AG04450 (cell line): ENCODE measurements at regions of chr15 and their contacts with region 1.

Region 1: DNA sequence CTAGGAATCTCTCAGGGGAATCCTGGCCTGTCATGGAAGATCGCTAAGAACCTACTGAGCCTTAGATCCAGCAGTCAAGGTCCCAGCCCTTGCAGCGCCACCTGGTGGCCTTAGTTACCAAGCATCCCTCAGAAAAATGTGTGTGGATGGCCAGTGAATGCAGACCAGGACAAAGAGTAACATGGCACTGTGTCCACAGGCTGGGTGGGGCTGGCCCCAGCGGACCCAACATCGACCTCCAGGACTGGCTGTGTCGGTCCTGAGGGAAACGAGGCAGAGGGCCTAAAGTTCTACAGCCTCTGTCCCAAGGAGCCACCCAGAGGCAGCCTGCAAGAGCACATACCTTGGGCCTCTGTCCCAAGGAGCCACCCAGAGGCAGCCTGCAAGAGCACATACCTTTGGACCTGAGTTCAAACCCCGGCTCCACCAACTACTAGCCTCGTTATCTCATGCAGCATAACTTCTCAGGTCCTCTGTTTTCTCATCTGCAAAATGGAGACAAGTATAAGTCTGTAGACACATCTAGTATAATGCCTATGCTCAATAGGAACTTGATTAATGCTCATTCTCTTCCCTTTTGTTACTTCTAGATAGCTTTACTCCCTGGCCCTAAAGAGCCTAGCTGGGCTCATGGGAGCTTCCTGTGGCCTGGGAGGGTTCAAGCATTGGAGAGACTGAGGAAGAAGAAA is 57.5 kb upstream of the HERC1 start:
- DNase-seq: peak; percentile 36
- H3K4me3 ChIP-seq: no peak overlapping the region
- H3K27ac ChIP-seq: no peak overlapping the region
- H3K27me3 ChIP-seq: peaks cover 7% of the 10 kb centered on the region
- CTCF ChIP-seq: peak; percentile 89

Region 2: DNA sequence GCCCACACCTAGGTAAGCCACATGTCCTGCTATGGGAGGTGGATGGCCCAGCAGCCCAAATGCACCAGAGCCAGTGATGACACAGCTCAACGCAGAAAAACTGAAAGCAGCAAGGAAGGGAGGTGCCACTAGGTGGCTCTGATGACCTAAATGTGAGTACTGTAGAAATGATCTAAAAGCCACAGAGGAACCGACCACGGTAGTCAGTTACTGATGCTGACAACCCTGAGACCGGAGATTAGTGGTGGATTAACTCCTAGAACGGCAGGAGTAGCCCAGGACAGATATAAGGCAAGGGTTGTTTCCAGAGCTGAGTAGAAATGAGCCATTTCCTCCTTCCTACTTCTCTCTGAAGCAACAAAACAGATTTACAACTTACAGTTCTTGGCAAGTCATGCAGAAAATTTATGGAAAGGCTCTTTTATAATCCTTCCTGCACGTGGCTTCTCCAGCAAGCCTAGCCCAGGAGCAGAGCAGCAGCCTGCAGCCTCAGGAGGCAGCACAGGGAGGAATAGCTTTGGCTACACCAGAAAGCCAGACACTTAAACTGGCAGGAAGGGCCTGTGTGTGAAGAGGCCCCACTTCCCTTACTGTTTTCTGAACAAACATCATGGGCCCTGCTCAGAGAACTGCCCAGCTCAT is 280.9 kb before region 1 on chr15:
- CTCF ChIA-PET with region 1: interaction called, 18 read pairs
- POLR2A ChIA-PET with region 1: no interaction called
- DNase-seq: peak; percentile 42
- H3K4me3 ChIP-seq: no peak overlapping the region
- H3K27ac ChIP-seq: peak overlapping the region; percentile 66
- H3K27me3 ChIP-seq: no peaks in the 10 kb centered on the region
- CTCF ChIP-seq: peak; percentile 84

Region 3: GRCh38 chr15:63805993-63806980 is 84.9 kb before region 1 on chr15:
- CTCF ChIA-PET with region 1: no interaction called
- POLR2A ChIA-PET with region 1: no interaction called
- DNase-seq: no peak
- H3K4me3 ChIP-seq: no peak overlapping the region
- H3K27ac ChIP-seq: no peak overlapping the region
- H3K27me3 ChIP-seq: no peaks in the 10 kb centered on the region
- CTCF ChIP-seq: no peak

Region 4: GRCh38 chr15:63905558-63906265 is 14.5 kb after region 1 on chr15:
- CTCF ChIA-PET with region 1: interaction called, 17 read pairs
- POLR2A ChIA-PET with region 1: no interaction called
- DNase-seq: no peak
- H3K4me3 ChIP-seq: no peak overlapping the region
- H3K27ac ChIP-seq: no peak overlapping the region
- H3K27me3 ChIP-seq: no peaks in the 10 kb centered on the region
- CTCF ChIP-seq: no peak

Region 5: GRCh38 chr15:64019764-64020163 is 128.5 kb after region 1 on chr15:
- CTCF ChIA-PET with region 1: no interaction called
- POLR2A ChIA-PET with region 1: no interaction called
- DNase-seq: no peak
- H3K4me3 ChIP-seq: no peak overlapping the region
- H3K27ac ChIP-seq: no peak overlapping the region
- H3K27me3 ChIP-seq: peaks cover 33% of the 10 kb centered on the region
- CTCF ChIP-seq: no peak

Region 6: GRCh38 chr15:64067564-64068030 is 176.4 kb after region 1 on chr15:
- CTCF ChIA-PET with region 1: interaction called, 27 read pairs
- POLR2A ChIA-PET with region 1: interaction called, 3 read pairs
- DNase-seq: peak; percentile 8
- H3K4me3 ChIP-seq: no peak overlapping the region
- H3K27ac ChIP-seq: no peak overlapping the region
- H3K27me3 ChIP-seq: no peaks in the 10 kb centered on the region
- CTCF ChIP-seq: peak; percentile 81